ENCODE measurements at regions of chr3 and their contacts with region 1.

Region 1: GRCh38 chr3:33372218-33373081 is 67.8 kb downstream of the UBP1 start:
- DNase-seq: peak; percentile 47
- H3K4me3 Mint-ChIP-seq: no peak overlapping the region
- H3K27ac Mint-ChIP-seq: no peak overlapping the region
- H3K4me1 Mint-ChIP-seq: peaks cover 5% of the 10 kb centered on the region
- H3K27me3 Mint-ChIP-seq: peaks cover 5% of the 10 kb centered on the region

Region 2: DNA sequence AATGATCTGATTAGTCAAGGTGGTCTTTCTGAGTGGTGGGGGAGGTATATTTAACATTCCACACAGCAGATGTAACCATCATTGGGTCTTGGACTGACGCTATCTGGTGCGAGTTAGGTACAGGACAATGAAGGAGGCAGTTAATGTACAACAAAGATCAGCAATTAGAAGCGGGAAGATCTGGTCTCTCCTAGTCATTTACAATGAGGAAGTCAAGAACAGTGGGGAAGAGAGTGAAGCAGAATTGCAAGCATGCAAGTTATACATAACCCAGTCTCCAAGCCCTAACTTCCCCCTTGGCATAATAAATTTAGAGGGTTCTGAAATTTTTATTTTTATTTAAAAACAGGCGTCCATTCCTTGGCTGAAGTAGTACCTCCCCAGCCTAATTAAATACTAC is 1252.0 kb before region 1 on chr3:
- CTCF ChIA-PET with region 1: no interaction called
- POLR2A ChIA-PET with region 1: no interaction called
- DNase-seq: no peak
- H3K4me3 Mint-ChIP-seq: no peak overlapping the region
- H3K27ac Mint-ChIP-seq: no peak overlapping the region
- H3K4me1 Mint-ChIP-seq: peaks cover 6% of the 10 kb centered on the region
- H3K27me3 Mint-ChIP-seq: no peaks in the 10 kb centered on the region

Region 3: DNA sequence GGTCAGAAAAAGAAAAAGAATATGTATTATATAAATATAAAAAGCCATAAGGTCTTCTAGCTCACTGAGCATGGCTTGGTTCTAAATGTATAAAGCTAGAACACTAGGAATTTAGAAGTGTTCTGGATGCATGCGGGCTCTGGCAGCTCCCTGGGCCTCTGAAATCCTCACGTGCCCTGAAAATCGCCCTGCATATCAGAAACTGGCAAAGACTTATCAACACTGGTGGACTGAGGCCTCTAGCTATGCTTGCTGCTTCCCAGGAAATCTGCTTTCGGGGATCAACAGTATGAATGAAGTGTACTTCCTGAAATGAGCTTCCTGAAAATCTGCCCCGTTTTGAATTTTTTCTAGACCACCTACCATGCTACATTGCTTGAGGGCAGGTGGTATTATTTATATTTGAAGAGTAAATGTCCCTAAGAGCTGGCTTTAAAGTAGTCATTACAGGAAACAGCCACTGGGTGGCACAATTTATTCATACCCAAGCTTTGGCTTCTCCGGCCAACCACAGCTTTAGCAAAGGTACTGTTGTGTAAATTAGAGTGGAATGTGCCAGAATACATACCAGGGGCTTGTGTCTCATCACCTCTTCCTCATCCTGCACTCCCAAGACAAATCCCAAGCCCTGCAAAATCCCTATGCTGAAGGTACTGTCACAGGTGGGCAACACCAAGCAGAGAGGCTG is 241.0 kb before region 1 on chr3:
- CTCF ChIA-PET with region 1: interaction called, 95 read pairs
- POLR2A ChIA-PET with region 1: interaction called, 4 read pairs
- DNase-seq: peak; percentile 40
- H3K4me3 Mint-ChIP-seq: no peak overlapping the region
- H3K27ac Mint-ChIP-seq: no peak overlapping the region
- H3K4me1 Mint-ChIP-seq: peaks cover 4% of the 10 kb centered on the region
- H3K27me3 Mint-ChIP-seq: no peaks in the 10 kb centered on the region

Region 4: DNA sequence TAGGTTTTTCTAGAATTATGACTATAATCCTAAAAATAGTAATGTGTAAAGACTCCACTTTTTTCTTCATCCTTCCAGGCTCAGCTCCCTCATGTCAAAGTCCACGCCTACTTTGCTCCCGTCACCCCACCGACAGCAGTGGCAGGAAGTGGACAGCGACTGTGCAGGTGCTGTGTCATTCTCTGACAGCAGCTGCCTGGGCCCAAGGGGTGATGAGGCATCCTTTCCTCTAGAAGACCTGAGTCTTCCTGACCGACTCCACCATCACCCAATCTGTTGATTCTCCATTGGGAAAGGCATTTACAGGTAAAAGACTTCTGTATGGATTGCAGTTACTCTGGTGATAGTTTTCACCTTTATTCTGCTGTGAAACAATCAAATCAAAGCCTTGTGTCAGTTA is 13.0 kb after region 1 on chr3:
- CTCF ChIA-PET with region 1: interaction called, 25 read pairs
- POLR2A ChIA-PET with region 1: interaction called, 4 read pairs
- DNase-seq: peak; percentile 70
- H3K4me3 Mint-ChIP-seq: no peak overlapping the region
- H3K27ac Mint-ChIP-seq: peak overlapping the region; percentile 33
- H3K4me1 Mint-ChIP-seq: peaks cover 17% of the 10 kb centered on the region
- H3K27me3 Mint-ChIP-seq: no peaks in the 10 kb centered on the region

Region 5: DNA sequence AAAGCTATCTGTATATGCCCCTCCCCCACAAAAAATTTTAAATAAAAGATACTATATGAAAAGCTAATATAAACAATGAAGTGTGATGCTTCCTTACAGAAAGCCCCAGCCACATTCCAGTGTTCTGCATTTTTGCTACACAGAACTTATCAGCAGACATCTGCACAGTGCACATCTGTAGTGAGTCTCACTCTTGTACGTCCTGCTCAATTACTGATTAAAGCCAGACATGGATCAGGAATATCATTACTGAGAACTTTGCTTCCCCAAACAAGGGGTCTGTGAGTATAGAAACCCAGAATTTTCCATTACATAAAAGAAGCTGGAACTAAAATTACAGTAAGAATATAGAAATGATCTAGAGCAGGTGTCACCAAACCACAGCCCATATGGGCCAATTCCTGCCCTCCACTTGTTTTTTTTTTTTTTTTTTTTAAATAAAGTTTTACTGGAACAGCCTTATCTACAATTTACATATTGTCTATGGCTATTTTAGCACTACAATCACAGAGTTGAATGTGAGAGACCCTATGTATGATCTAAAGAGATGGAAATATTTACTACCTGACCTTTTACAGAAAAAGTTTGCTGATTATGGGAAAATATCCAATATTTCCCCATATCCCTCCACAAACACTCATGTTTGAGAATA is 22.1 kb after region 1 on chr3:
- CTCF ChIA-PET with region 1: interaction called, 10 read pairs
- POLR2A ChIA-PET with region 1: no interaction called
- DNase-seq: no peak
- H3K4me3 Mint-ChIP-seq: no peak overlapping the region
- H3K27ac Mint-ChIP-seq: no peak overlapping the region
- H3K4me1 Mint-ChIP-seq: peaks cover 16% of the 10 kb centered on the region
- H3K27me3 Mint-ChIP-seq: no peaks in the 10 kb centered on the region

Measured in activated CD4-positive, alpha-beta memory T cell treated with anti-CD3 and anti-CD28 coated beads, Interleukin-2, amount 10 ng/mL, durations not matched to agents 7 days and 5 days (primary cell).